ENCODE measurements at regions of chr5 and their contacts with region 1.

Region 1: DNA sequence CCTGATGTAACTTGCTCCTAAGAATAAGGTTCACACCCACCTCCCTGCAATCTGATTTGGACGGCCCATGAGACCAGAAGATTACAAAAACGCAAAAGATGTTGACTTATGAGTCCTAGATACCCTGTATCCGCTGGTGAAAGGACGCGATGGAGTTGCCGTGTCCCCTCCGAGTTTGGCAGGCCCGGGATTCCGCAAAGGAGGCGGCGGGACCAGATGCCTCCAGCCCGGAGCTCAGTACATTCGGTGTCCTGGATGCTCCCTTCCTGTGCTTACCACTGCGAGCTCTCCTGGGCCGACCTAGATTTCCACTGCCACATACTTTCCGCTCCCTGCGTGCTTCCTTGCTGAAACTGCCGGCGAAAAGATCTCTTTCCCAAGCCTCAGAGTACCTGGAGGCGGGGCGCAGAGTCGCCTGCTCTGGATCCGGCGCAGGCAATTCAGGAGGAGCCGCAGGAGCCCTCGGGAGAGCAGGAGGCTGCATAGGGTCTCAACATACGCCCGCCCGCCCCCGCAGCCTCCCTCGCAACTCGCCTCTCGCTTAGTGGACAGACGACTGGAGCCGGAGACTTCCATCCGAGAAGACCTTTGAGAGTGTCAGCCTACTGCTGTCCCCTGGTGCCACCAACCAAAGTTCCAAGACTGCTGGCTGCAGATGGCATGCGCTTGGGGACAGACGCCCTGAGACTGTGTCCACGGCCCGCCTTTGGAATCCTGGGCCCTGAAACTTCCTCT is 39.8 kb downstream of the ANXA2R start:
- DNase-seq: peak; percentile 69 to 81
- H3K4me3 ChIP-seq: peak overlapping the region; percentile 55
- H3K27ac ChIP-seq: peak overlapping the region; percentile 59
- H3K4me1 ChIP-seq: peaks cover 29% of the 10 kb centered on the region
- H3K27me3 ChIP-seq: no peaks in the 10 kb centered on the region
- CTCF ChIP-seq: no peak

Region 2: GRCh38 chr5:43040287-43041098 is 40.2 kb after region 1 on chr5 and contains the start of gene ANXA2R:
- CTCF ChIA-PET with region 1: interaction called, 4 read pairs
- POLR2A ChIA-PET with region 1: no interaction called
- intact Hi-C with region 1: loop called (anchors 2 kb)
- DNase-seq: peak; percentile 94 to 97
- H3K4me3 ChIP-seq: peak within 1 kb of the TSS; percentile 76
- H3K27ac ChIP-seq: peak within 1 kb of the TSS; percentile 60
- H3K4me1 ChIP-seq: peaks cover 1% of the 10 kb centered on the region; the same call in 1 of the 2 replicates
- H3K27me3 ChIP-seq: no peaks in the 10 kb centered on the region
- CTCF ChIP-seq: peak; percentile 99
- total RNA-seq, gene ANXA2R: 3.6 and 6.3 TPM in 2 replicates

Region 3: GRCh38 chr5:43179836-43180235 is 179.6 kb after region 1 on chr5:
- CTCF ChIA-PET with region 1: interaction called, 13 read pairs
- POLR2A ChIA-PET with region 1: no interaction called
- intact Hi-C with region 1: no loop called
- DNase-seq: no peak
- H3K4me3 ChIP-seq: no peak overlapping the region
- H3K27ac ChIP-seq: no peak overlapping the region; the same call in 1 of the 2 replicates
- H3K4me1 ChIP-seq: no peaks in the 10 kb centered on the region
- H3K27me3 ChIP-seq: no peaks in the 10 kb centered on the region
- CTCF ChIP-seq: no peak

Measured in PC-9 (cell line).